Activated CD4-positive, alpha-beta memory T cell treated with anti-CD3 and anti-CD28 coated beads, Interleukin-2, amount 10 ng/mL, durations not matched to agents 7 days and 5 days (primary cell): ENCODE measurements at regions of chr11 and their contacts with region 1.

Region 1: GRCh38 chr11:58567889-58568512 is 7.7 kb downstream of the LPXN start:
- DNase-seq: peak; percentile 77
- H3K4me3 Mint-ChIP-seq: no peak overlapping the region
- H3K27ac Mint-ChIP-seq: peak overlapping the region; percentile 61
- H3K4me1 Mint-ChIP-seq: peaks cover 63% of the 10 kb centered on the region
- H3K27me3 Mint-ChIP-seq: no peaks in the 10 kb centered on the region

Region 2: DNA sequence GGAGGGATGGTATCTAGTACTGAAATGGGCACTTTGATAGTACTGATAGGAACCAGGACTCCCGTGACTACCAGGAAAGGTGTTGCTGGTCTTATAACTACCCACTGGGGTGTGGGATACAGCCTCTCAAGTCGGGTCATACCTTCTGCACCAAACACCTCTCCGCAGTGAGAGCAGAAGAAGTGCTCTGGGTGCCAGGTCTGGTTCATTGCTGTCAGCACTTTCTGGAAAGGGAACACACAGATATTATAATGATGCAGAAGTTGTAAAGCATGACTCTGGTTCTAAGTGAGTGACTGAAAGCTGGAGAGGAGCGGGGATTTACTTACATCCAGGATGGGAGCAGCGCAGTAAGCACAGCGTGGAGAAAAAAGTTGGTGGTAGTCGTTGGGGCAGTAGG is 18.4 kb before region 1 on chr11:
- CTCF ChIA-PET with region 1: interaction called, 10 read pairs
- POLR2A ChIA-PET with region 1: interaction called, 3 read pairs
- DNase-seq: no peak
- H3K4me3 Mint-ChIP-seq: no peak overlapping the region
- H3K27ac Mint-ChIP-seq: no peak overlapping the region
- H3K4me1 Mint-ChIP-seq: peaks cover 2% of the 10 kb centered on the region
- H3K27me3 Mint-ChIP-seq: no peaks in the 10 kb centered on the region

Region 3: DNA sequence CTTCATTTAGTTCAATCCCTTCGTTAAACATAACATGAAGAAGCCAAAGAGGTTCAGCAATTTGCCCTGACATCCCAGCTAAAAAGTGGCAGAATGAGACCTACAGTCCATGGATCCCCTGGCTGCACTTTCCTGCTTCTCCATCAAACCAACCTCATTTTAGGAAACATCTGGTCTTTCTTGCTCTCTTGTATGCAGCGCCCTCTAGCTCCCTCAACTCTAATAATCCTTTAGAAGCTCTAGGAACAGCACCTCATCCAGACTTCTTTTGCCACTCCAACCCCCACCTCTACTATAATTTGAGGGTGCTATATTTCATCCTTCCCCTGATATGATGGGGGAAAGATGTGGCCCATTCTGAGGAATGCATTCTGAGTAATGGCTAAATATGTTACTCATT is 61.9 kb after region 1 on chr11:
- CTCF ChIA-PET with region 1: interaction called, 39 read pairs
- POLR2A ChIA-PET with region 1: interaction called, 4 read pairs
- DNase-seq: no peak
- H3K4me3 Mint-ChIP-seq: no peak overlapping the region
- H3K27ac Mint-ChIP-seq: no peak overlapping the region
- H3K4me1 Mint-ChIP-seq: peaks cover 5% of the 10 kb centered on the region
- H3K27me3 Mint-ChIP-seq: no peaks in the 10 kb centered on the region

Region 4: GRCh38 chr11:58641803-58642581 is 74.0 kb after region 1 on chr11:
- CTCF ChIA-PET with region 1: no interaction called
- POLR2A ChIA-PET with region 1: no interaction called
- DNase-seq: no peak
- H3K4me3 Mint-ChIP-seq: no peak overlapping the region
- H3K27ac Mint-ChIP-seq: no peak overlapping the region
- H3K4me1 Mint-ChIP-seq: peaks cover 9% of the 10 kb centered on the region
- H3K27me3 Mint-ChIP-seq: peaks cover 2% of the 10 kb centered on the region